ENCODE measurements at regions of chr7 and their contacts with region 1.

Region 1: GRCh38 chr7:156816943-156817572 is 75.9 kb downstream of the LMBR1 start:
- DNase-seq: no peak
- H3K4me3 ChIP-seq: no peak overlapping the region
- H3K27ac ChIP-seq: no peak overlapping the region
- H3K4me1 ChIP-seq: no peaks in the 10 kb centered on the region
- H3K27me3 ChIP-seq: no peaks in the 10 kb centered on the region
- CTCF ChIP-seq: no peak
- POLR2A ChIP-seq: no peak

Region 2: GRCh38 chr7:155796381-155797261 is 1020.4 kb before region 1 on chr7:
- intact Hi-C with region 1: loop called (anchors 10 kb)
- DNase-seq: peak; percentile 33 to 45
- H3K4me3 ChIP-seq: no peak overlapping the region
- H3K27ac ChIP-seq: no peak overlapping the region
- H3K4me1 ChIP-seq: no peaks in the 10 kb centered on the region
- H3K27me3 ChIP-seq: peaks cover 0 to 14% of the 10 kb centered on the region in 2 donors
- CTCF ChIP-seq: peak; percentile 69 to 87 (median 76)
- POLR2A ChIP-seq: no peak

Region 3: DNA sequence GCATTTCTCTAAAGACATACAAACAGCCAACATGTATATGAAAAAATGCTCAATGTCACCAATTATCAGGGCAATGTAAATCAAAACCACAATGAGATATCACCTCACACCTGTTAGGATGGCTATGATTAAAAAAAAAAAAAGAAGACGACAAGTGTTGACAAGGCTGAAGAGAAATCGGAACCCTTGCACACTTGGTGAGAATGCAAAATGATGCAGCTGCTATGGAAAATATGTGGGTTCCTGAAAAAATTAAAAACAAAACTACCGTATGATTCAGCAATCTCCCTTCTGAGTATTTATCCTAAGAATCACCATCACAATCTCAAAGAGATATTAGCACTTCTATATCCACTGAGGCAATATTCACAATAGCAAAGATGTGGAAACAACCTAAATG is 64.6 kb after region 1 on chr7:
- intact Hi-C with region 1: no loop called
- DNase-seq: no peak
- H3K4me3 ChIP-seq: no peak overlapping the region
- H3K27ac ChIP-seq: no peak overlapping the region
- H3K4me1 ChIP-seq: no peaks in the 10 kb centered on the region
- H3K27me3 ChIP-seq: no peaks in the 10 kb centered on the region
- CTCF ChIP-seq: no peak
- POLR2A ChIP-seq: no peak